CD14-positive monocyte (primary cell): ENCODE measurements at regions of chr17 and their contacts with region 1.

Region 1: GRCh38 chr17:12020642-12021622 is at the start of gene MAP2K4:
- DNase-seq: peak; percentile 81 to 90 (median 87)
- H3K4me3 ChIP-seq: peak within 1 kb of the TSS; percentile 45 to 81 (median 79)
- H3K4me3 Mint-ChIP-seq: peak within 1 kb of the TSS; percentile 81 to 85
- H3K27ac ChIP-seq: peak within 1 kb of the TSS in 1 of 2 donors; percentile 79
- H3K27ac Mint-ChIP-seq: peak within 1 kb of the TSS in 4 of 7 donors; percentile 25 to 83 (median 58)
- H3K4me1 ChIP-seq: peaks cover 15 to 19% of the 10 kb centered on the region in 2 donors
- H3K4me1 Mint-ChIP-seq: peaks cover 31% of the 10 kb centered on the region
- H3K27me3 ChIP-seq: peaks cover 15% of the 10 kb centered on the region in 2 donors
- H3K27me3 Mint-ChIP-seq: peaks cover 11 to 15% (median 13%) of the 10 kb centered on the region in 3 donors
- CTCF ChIP-seq: no peak
- polyA plus RNA-seq, gene MAP2K4: 8.1 to 41.8 (median 23.2) TPM

Region 2: GRCh38 chr17:11997147-11997846 is 23.6 kb before region 1 on chr17 and contains the start of gene ZNF18:
- intact Hi-C with region 1: loop called (anchors 2 kb)
- DNase-seq: peak; percentile 94 to 96 (median 96)
- H3K4me3 ChIP-seq: peak within 1 kb of the TSS; percentile 87 to 98 (median 96)
- H3K4me3 Mint-ChIP-seq: peak within 1 kb of the TSS; percentile 95 to 99
- H3K27ac ChIP-seq: peak within 1 kb of the TSS; percentile 92 to 97
- H3K27ac Mint-ChIP-seq: peak within 1 kb of the TSS; percentile 94 to 99 (median 97)
- H3K4me1 ChIP-seq: peaks cover 22 to 28% of the 10 kb centered on the region in 2 donors
- H3K4me1 Mint-ChIP-seq: peaks cover 30% of the 10 kb centered on the region
- H3K27me3 ChIP-seq: no peaks in the 10 kb centered on the region
- H3K27me3 Mint-ChIP-seq: peaks cover 0 to 3% (median 2%) of the 10 kb centered on the region in 3 donors
- CTCF ChIP-seq: no peak
- polyA plus RNA-seq, gene ZNF18: 4.0 to 8.9 (median 5.4) TPM

Region 3: GRCh38 chr17:12041316-12041715 is 20.4 kb after region 1 on chr17:
- intact Hi-C with region 1: no loop called
- DNase-seq: no peak
- H3K4me3 ChIP-seq: no peak overlapping the region
- H3K4me3 Mint-ChIP-seq: no peak overlapping the region
- H3K27ac ChIP-seq: no peak overlapping the region
- H3K27ac Mint-ChIP-seq: no peak overlapping the region
- H3K4me1 ChIP-seq: no peaks in the 10 kb centered on the region
- H3K4me1 Mint-ChIP-seq: no peaks in the 10 kb centered on the region
- H3K27me3 ChIP-seq: no peaks in the 10 kb centered on the region
- H3K27me3 Mint-ChIP-seq: no peaks in the 10 kb centered on the region
- CTCF ChIP-seq: no peak